ENCODE measurements at regions of chr1 and their contacts with region 1.

Region 1: GRCh38 chr1:68358439-68358838 is 91.3 kb downstream of the RPE65 start:
- DNase-seq: no peak
- H3K4me3 ChIP-seq: no peak overlapping the region
- H3K4me1 ChIP-seq: peaks cover 15% of the 10 kb centered on the region
- H3K27me3 ChIP-seq: no peaks in the 10 kb centered on the region

Region 2: DNA sequence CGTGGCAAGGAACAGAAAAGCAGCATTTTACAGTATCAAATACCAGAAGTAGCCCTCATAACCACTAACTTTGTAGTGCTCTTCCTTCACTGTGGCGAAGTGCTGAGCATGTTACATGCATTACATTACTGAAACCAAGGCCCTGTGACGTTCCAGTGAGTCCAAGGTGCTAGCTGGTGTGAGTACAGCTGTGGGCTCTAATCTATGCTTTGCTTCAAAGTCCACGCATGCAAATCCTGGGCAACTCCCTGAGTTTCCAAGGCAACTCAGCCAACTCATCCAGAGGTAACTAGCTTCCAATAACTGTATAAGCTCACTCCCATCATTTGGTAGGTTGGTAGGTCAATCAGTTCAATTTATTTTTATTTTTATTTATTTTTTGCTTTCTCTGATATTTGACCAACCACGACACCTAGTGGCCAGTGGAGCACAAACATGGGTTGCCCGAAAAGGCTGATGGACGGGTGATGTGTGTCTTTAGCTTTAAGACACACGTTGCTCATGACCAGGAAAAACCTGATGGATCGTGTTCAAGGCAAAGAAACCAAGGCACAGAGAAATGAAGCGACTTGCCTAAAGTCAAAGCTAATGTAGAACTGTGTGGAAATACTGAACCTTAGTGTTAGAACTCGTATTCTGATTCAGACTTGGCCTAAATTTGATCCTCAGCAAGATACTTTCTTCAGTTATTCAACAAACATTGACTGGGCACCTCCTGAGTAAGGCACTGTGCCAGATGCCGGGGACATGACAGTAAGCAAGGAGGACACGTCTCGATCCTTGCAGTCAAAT is 598.2 kb before region 1 on chr1:
- in situ Hi-C with region 1: no loop called
- DNase-seq: peak; percentile 38 to 72
- H3K4me3 ChIP-seq: no peak overlapping the region
- H3K4me1 ChIP-seq: no peaks in the 10 kb centered on the region
- H3K27me3 ChIP-seq: no peaks in the 10 kb centered on the region

Region 3: DNA sequence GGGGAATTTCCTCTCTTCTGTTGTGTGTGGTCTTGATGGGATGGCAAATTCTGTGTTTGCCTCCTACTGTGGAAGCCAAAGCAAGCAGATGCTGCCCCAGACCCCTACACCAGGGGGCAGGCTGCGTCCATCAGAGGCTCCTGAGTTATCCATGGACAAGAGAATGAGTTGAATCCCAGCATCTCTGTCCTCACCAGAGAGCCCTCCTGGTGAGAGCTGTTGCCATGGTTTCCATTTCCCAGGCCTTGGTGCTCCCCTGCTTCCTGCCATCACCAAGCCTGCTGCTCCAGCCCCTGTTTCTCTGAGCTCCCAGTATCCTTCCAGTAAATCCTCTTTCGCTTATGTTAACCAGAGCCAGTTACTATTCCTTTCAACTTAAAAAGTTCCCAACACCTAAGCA is 504.7 kb before region 1 on chr1:
- in situ Hi-C with region 1: loop called (anchors 10 kb)
- DNase-seq: peak; percentile 57 to 77
- H3K4me3 ChIP-seq: no peak overlapping the region
- H3K4me1 ChIP-seq: no peaks in the 10 kb centered on the region
- H3K27me3 ChIP-seq: no peaks in the 10 kb centered on the region

Measured in HAP-1 (cell line).